ENCODE measurements at regions of chr20 and their contacts with region 1.

Region 1: DNA sequence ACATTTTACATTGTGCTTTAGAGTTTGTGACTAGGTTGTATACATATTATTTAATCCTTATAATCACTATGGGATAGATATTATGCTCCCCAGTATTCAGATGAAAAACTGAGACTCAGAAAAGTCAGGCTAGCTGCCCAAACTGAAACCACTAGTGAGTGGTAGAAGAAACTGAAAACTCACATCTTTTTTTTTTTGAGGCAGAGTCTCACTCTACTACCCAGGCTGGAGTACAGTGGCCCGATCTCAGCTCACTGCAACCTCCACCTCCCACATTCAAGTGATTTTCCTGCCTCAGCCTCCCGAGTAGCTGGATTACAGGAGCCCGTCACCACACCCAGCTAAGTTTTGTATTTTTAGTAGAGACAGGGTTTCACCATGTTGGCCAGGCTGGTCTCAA is 22.2 kb downstream of the RNF24 start:
- DNase-seq: peak in 1 of 9 experiments; percentile 22
- ATAC-seq: no peak
- H3K4me3 ChIP-seq: no peak overlapping the region
- H3K4me3 Mint-ChIP-seq: no peak overlapping the region
- H3K27ac ChIP-seq: no peak overlapping the region
- H3K27ac Mint-ChIP-seq: peak overlapping the region; percentile 18
- H3K4me1 ChIP-seq: peaks cover 35% of the 10 kb centered on the region
- H3K4me1 Mint-ChIP-seq: peaks cover 53% of the 10 kb centered on the region
- H3K27me3 ChIP-seq: no peaks in the 10 kb centered on the region
- H3K27me3 Mint-ChIP-seq: no peaks in the 10 kb centered on the region
- CTCF ChIP-seq: no peak

Region 2: DNA sequence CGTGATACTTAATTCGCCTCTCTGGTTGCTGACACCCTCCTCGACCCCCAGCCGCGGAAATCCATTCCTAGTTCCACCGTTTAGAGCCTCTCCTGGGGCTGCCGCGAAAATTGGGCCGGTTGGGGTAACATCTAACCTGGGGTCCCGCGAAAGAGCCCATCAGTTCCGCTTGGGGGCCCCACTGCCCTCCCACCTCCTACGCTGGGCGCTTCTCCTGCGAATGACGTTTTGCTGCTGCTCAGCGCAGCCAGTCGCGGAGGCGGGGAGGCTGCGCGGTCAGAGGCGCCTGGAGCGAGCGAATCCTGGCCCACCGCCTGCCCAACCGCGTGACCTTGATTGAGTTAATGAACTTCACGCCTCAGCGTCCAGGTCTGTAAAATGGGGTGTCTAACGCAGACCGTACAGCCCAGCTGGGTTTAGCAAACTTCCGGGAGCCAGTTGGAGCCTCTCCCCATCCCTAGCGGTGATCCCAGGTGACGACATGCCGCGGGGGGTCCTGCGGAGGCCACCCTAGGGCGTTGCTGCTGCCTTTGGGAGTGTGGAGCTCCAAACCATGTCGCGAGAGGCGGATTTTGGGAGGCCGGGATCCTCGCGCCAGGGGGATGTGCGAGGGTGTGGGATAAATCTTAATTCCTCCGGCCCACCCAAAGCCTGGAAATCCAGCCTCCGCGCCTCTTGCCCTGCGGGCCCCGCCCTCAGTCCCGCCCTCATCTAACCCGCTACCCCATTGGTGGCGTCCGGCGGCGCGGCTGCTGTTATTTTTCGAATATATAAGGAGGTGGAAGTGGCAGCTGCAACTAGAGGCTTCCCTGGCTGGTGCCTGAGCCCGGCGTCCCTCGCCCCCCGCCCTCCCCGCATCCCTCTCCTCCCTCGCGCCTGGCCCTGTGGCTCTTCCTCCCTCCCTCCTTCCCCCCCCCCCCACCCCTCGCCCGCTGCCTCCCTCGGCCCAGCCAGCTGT is 197.3 kb before region 1 on chr20 and contains the start of gene CDC25B:
- CTCF ChIA-PET with region 1: no interaction called
- POLR2A ChIA-PET with region 1: no interaction called
- intact Hi-C with region 1: no loop called
- DNase-seq: peak; percentile 80 to 94 (median 92)
- ATAC-seq: peak; percentile 77
- H3K4me3 ChIP-seq: peak within 1 kb of the TSS; percentile 95 to 98
- H3K4me3 Mint-ChIP-seq: peak within 1 kb of the TSS; percentile 98
- H3K27ac ChIP-seq: peak within 1 kb of the TSS; percentile 95 to 99
- H3K27ac Mint-ChIP-seq: peak within 1 kb of the TSS; percentile 98
- H3K4me1 ChIP-seq: peaks cover 37% of the 10 kb centered on the region
- H3K4me1 Mint-ChIP-seq: peaks cover 42% of the 10 kb centered on the region
- H3K27me3 ChIP-seq: no peaks in the 10 kb centered on the region
- H3K27me3 Mint-ChIP-seq: no peaks in the 10 kb centered on the region
- CTCF ChIP-seq: peak; percentile 60
- total RNA-seq, gene CDC25B: 135 to 140 TPM

Region 3: DNA sequence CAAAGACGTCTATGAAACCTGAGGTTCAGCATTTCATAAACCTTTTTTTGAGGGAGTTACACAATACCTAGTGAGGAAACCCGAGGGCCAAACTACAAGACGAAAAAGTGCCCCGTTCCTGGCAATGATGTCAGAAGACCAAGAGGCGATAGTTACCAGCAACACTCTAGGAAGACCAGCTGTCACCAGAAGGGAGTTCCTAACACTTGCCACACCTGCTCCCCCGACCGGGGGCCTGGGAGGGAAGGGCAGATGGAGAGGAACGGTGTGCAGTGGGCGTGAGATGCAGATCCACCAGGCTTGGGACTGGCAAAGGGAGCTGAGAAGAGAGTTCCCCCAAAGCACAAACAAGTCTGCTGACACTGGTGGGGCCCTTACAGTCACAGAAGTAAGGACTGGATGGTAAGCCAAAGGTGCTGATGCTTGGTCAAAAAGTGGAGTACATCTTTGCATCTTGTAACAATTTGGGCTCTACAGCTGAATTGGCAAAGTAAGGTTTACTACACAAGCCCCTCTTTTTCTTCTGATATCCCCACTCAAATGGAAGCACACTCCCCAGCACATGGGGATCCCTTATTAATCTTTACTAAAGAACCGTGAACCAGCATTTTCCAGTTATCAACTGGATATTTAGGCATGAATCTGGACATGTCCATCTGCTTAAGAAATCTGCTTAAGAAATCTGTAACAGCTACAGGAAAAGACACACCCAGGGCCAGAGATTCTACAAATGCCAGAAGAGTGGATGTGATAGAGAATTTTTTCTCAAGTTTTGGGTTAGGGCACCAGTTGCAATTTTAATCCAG is 65.4 kb before region 1 on chr20:
- CTCF ChIA-PET with region 1: no interaction called
- POLR2A ChIA-PET with region 1: no interaction called
- intact Hi-C with region 1: loop called in 1 of 2 experiments (anchors 5 kb)
- DNase-seq: no peak
- ATAC-seq: no peak
- H3K4me3 ChIP-seq: no peak overlapping the region
- H3K4me3 Mint-ChIP-seq: no peak overlapping the region
- H3K27ac ChIP-seq: peak overlapping the region in 1 of 2 experiments; percentile 2
- H3K27ac Mint-ChIP-seq: peak overlapping the region; percentile 20
- H3K4me1 ChIP-seq: peaks cover 12% of the 10 kb centered on the region
- H3K4me1 Mint-ChIP-seq: peaks cover 55% of the 10 kb centered on the region
- H3K27me3 ChIP-seq: no peaks in the 10 kb centered on the region
- H3K27me3 Mint-ChIP-seq: no peaks in the 10 kb centered on the region
- CTCF ChIP-seq: no peak

Region 4: DNA sequence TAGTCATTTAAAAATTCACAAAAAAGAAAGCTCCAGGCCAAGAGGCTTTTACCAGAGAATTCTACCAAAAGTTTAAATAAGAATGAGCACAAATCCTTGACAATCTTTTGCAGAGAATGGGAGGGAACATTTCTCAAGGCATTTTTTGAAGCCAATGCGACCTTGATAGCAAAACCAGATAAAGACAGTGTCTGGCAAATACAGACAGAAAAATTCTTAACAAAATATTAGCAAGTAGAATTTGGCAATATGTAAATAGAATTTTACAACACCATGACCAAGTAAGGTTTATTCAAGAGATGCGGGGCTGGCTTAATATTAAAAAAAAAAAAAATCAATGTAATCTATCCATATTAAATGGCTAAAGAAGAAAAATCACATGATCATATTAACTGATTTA is 19.4 kb before region 1 on chr20:
- CTCF ChIA-PET with region 1: no interaction called
- POLR2A ChIA-PET with region 1: no interaction called
- intact Hi-C with region 1: loop called in 1 of 2 experiments (anchors 2 kb)
- DNase-seq: no peak
- ATAC-seq: no peak
- H3K4me3 ChIP-seq: no peak overlapping the region
- H3K4me3 Mint-ChIP-seq: no peak overlapping the region
- H3K27ac ChIP-seq: no peak overlapping the region
- H3K27ac Mint-ChIP-seq: no peak overlapping the region
- H3K4me1 ChIP-seq: no peaks in the 10 kb centered on the region
- H3K4me1 Mint-ChIP-seq: peaks cover 7% of the 10 kb centered on the region
- H3K27me3 ChIP-seq: no peaks in the 10 kb centered on the region
- H3K27me3 Mint-ChIP-seq: no peaks in the 10 kb centered on the region
- CTCF ChIP-seq: no peak